ENCODE measurements at regions of chr5 and their contacts with region 1.

Region 1: DNA sequence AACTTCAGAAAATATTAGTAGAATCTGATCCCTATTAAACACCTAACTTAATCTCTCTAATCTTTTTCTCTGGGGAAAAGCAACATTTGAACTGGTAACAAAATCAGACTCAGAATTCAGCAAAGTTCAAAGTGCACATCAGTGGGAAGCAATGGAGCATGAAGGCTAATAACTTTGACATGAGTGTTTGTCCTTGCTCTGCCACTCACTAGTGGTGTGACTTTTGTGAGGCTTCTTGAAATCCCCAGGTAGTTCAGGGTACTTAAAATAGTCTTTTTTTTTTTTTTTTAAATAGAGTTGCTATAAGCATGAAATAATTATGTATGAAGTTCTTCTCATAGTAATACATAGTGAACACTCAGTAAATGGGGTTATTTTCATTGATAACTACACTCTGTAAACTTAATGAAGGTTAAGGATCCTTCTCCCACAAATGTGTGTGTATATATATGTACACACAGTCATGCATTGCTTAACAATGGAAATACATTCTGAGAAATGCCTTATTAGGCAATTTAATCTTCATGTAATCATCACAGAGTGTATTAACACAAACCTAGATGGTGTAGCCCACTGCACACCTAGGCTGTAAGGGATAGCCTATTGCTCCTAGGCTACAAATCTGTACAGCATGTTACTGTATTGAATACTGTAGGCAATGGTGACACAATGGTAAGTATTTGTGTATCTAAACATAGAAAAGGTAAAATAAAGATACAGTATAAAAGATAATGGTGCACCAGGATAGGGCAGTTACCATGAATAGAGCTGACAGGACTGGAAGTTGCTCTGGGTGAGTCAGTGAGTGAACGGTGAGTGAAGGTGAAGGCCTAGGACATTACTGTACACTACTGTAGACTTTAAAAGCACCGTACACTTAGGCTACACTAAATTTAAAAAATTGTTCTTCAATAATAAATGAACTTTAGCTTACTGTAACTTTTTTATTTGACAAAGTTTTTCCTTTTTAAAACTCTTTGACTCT is 73.3 kb upstream of the HMHB1 start:
- DNase-seq: peak; percentile 28
- ATAC-seq: peak; percentile 89
- H3K4me3 ChIP-seq: no peak overlapping the region
- H3K27ac ChIP-seq: no peak overlapping the region
- H3K4me1 ChIP-seq: no peaks in the 10 kb centered on the region
- H3K27me3 ChIP-seq: no peaks in the 10 kb centered on the region
- CTCF ChIP-seq: no peak
- EP300 ChIP-seq: 0 out of 4 replicates have a peak, but pooled peaks of 1 of the 2 experiments have one; percentile 6
- POLR2A ChIP-seq: no peak
- RAD21 ChIP-seq: no peak

Region 2: GRCh38 chr5:143359869-143360268 is 378.8 kb before region 1 on chr5:
- CTCF ChIA-PET with region 1: no interaction called
- POLR2A ChIA-PET with region 1: no interaction called
- RAD21 ChIA-PET with region 1: no interaction called
- SMC1A ChIA-PET with region 1: no interaction called
- in situ Hi-C with region 1: no loop called
- intact Hi-C with region 1: no loop called
- DNase-seq: no peak
- ATAC-seq: peak; percentile 42
- H3K4me3 ChIP-seq: no peak overlapping the region
- H3K27ac ChIP-seq: no peak overlapping the region
- H3K4me1 ChIP-seq: peaks cover 25% of the 10 kb centered on the region
- H3K27me3 ChIP-seq: no peaks in the 10 kb centered on the region
- CTCF ChIP-seq: no peak
- EP300 ChIP-seq: no peak
- POLR2A ChIP-seq: no peak
- RAD21 ChIP-seq: no peak

Region 3: GRCh38 chr5:143693651-143694252 is 45.0 kb before region 1 on chr5:
- CTCF ChIA-PET with region 1: interaction called, 4 read pairs
- POLR2A ChIA-PET with region 1: interaction called, 6 read pairs
- RAD21 ChIA-PET with region 1: interaction called, 17 read pairs
- SMC1A ChIA-PET with region 1: interaction called, 13 read pairs
- in situ Hi-C with region 1: no loop called
- intact Hi-C with region 1: no loop called
- DNase-seq: peak; percentile 31
- ATAC-seq: peak; percentile 100
- H3K4me3 ChIP-seq: no peak overlapping the region
- H3K27ac ChIP-seq: no peak overlapping the region
- H3K4me1 ChIP-seq: peaks cover 7% of the 10 kb centered on the region
- H3K27me3 ChIP-seq: no peaks in the 10 kb centered on the region
- CTCF ChIP-seq: no peak
- EP300 ChIP-seq: peak; percentile 79 to 86
- POLR2A ChIP-seq: no peak
- RAD21 ChIP-seq: no peak

Region 4: GRCh38 chr5:143749581-143750205 is 11.0 kb after region 1 on chr5:
- CTCF ChIA-PET with region 1: interaction called, 6 read pairs
- POLR2A ChIA-PET with region 1: interaction called, 3 read pairs
- RAD21 ChIA-PET with region 1: interaction called, 6 read pairs
- SMC1A ChIA-PET with region 1: interaction called, 13 read pairs
- in situ Hi-C with region 1: no loop called
- intact Hi-C with region 1: no loop called
- DNase-seq: no peak
- ATAC-seq: no peak
- H3K4me3 ChIP-seq: no peak overlapping the region
- H3K27ac ChIP-seq: no peak overlapping the region
- H3K4me1 ChIP-seq: no peaks in the 10 kb centered on the region
- H3K27me3 ChIP-seq: no peaks in the 10 kb centered on the region
- CTCF ChIP-seq: no peak
- EP300 ChIP-seq: no peak
- POLR2A ChIP-seq: no peak
- RAD21 ChIP-seq: no peak

Region 5: DNA sequence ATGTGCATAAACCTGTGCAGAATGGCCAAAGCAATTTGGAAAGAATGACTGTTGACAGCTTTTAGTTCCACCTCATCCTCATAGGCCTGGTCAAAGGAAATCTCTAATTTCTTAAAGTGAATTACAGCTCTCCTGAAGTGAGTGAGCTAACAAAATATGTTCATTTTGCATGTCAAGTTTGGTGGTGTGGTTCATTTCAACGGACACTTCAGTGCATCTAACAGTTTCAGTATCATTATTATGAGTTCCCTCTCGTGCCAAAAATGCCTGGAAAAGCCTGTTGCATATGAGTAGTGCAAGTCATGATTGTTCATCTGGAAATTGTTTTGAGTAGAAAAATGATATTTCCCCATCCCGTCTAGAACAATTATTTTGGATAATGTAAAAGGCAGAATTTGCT is 20.0 kb after region 1 on chr5:
- CTCF ChIA-PET with region 1: interaction called, 9 read pairs
- POLR2A ChIA-PET with region 1: interaction called, 4 read pairs
- RAD21 ChIA-PET with region 1: interaction called, 20 read pairs
- SMC1A ChIA-PET with region 1: interaction called, 51 read pairs
- in situ Hi-C with region 1: no loop called
- intact Hi-C with region 1: no loop called
- DNase-seq: peak; percentile 51
- ATAC-seq: peak; percentile 78
- H3K4me3 ChIP-seq: no peak overlapping the region; the same call in 1 of the 2 replicates
- H3K27ac ChIP-seq: peak overlapping the region; percentile 59; the same call in 1 of the 2 replicates
- H3K4me1 ChIP-seq: peaks cover 32% of the 10 kb centered on the region
- H3K27me3 ChIP-seq: no peaks in the 10 kb centered on the region
- CTCF ChIP-seq: no peak
- EP300 ChIP-seq: peak; percentile 48 to 79; a peak in 2 of 4 replicates
- POLR2A ChIP-seq: no peak
- RAD21 ChIP-seq: no peak

Region 6: DNA sequence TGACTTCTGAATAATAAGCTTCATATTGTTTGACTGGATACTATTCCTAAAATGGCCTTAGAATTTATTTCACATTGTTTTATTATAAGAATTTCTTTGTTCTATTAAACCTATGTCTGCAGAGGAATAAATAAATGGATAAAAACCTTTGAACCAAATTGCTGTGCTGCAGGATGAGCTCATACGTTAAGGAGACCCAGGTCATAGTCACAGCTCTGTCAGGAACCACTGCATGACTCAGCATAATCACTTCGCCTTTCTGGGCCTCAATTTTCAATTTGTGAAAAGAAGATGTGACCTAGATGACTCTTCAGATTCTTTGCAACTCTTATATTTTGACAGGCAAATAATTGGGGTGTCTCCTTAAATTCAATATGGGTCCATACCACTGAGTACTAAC is 36.5 kb after region 1 on chr5:
- CTCF ChIA-PET with region 1: no interaction called
- POLR2A ChIA-PET with region 1: no interaction called
- RAD21 ChIA-PET with region 1: interaction called, 4 read pairs
- SMC1A ChIA-PET with region 1: interaction called, 11 read pairs
- in situ Hi-C with region 1: no loop called
- intact Hi-C with region 1: no loop called
- DNase-seq: no peak
- ATAC-seq: peak; percentile 74
- H3K4me3 ChIP-seq: no peak overlapping the region
- H3K27ac ChIP-seq: no peak overlapping the region; the same call in 1 of the 2 replicates
- H3K4me1 ChIP-seq: no peaks in the 10 kb centered on the region
- H3K27me3 ChIP-seq: no peaks in the 10 kb centered on the region
- CTCF ChIP-seq: no peak
- EP300 ChIP-seq: no peak
- POLR2A ChIP-seq: no peak
- RAD21 ChIP-seq: no peak

Region 7: GRCh38 chr5:143800715-143801114 is 62.0 kb after region 1 on chr5:
- CTCF ChIA-PET with region 1: interaction called, 3 read pairs
- POLR2A ChIA-PET with region 1: interaction called, 5 read pairs
- RAD21 ChIA-PET with region 1: interaction called, 14 read pairs
- SMC1A ChIA-PET with region 1: interaction called, 15 read pairs
- in situ Hi-C with region 1: no loop called
- intact Hi-C with region 1: no loop called
- DNase-seq: no peak
- ATAC-seq: peak; percentile 70
- H3K4me3 ChIP-seq: no peak overlapping the region
- H3K27ac ChIP-seq: no peak overlapping the region; the same call in 1 of the 2 replicates
- H3K4me1 ChIP-seq: peaks cover 10% of the 10 kb centered on the region
- H3K27me3 ChIP-seq: no peaks in the 10 kb centered on the region
- CTCF ChIP-seq: no peak
- EP300 ChIP-seq: no peak
- POLR2A ChIP-seq: no peak
- RAD21 ChIP-seq: no peak

Region 8: DNA sequence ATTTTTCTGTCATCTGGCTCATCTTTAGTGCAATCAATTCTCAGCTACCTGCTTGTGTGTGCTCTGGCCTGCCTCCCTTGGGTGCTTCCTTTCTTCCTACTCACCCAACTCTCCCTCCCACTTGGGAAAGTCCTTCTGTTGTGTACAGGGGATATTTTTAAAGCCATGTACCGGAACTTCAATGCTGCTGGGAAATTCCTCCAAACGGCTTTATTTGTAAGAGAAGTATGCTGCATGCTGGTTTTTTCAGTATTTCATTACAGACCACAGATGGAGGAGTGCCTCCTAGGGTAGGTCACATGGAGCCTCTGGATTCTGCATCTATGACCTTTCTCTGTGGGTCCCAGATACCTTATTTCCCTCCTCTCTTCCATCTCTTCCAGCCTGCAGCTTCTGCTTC is 67.9 kb after region 1 on chr5:
- CTCF ChIA-PET with region 1: interaction called, 3 read pairs
- POLR2A ChIA-PET with region 1: interaction called, 5 read pairs
- RAD21 ChIA-PET with region 1: interaction called, 14 read pairs
- SMC1A ChIA-PET with region 1: interaction called, 15 read pairs
- in situ Hi-C with region 1: no loop called
- intact Hi-C with region 1: no loop called
- DNase-seq: peak; percentile 60
- ATAC-seq: peak; percentile 90
- H3K4me3 ChIP-seq: peak overlapping the region; percentile 66
- H3K27ac ChIP-seq: peak overlapping the region; percentile 34; the same call in 1 of the 2 replicates
- H3K4me1 ChIP-seq: peaks cover 3% of the 10 kb centered on the region; the same call in 1 of the 2 replicates
- H3K27me3 ChIP-seq: no peaks in the 10 kb centered on the region
- CTCF ChIP-seq: no peak
- EP300 ChIP-seq: peak in 1 of 2 experiments; percentile 42; a peak in 1 of 4 replicates
- POLR2A ChIP-seq: no peak
- RAD21 ChIP-seq: peak; percentile 25; the same call in 1 of the 2 replicates